ENCODE measurements at regions of chrX and their contacts with region 1.

Region 1: DNA sequence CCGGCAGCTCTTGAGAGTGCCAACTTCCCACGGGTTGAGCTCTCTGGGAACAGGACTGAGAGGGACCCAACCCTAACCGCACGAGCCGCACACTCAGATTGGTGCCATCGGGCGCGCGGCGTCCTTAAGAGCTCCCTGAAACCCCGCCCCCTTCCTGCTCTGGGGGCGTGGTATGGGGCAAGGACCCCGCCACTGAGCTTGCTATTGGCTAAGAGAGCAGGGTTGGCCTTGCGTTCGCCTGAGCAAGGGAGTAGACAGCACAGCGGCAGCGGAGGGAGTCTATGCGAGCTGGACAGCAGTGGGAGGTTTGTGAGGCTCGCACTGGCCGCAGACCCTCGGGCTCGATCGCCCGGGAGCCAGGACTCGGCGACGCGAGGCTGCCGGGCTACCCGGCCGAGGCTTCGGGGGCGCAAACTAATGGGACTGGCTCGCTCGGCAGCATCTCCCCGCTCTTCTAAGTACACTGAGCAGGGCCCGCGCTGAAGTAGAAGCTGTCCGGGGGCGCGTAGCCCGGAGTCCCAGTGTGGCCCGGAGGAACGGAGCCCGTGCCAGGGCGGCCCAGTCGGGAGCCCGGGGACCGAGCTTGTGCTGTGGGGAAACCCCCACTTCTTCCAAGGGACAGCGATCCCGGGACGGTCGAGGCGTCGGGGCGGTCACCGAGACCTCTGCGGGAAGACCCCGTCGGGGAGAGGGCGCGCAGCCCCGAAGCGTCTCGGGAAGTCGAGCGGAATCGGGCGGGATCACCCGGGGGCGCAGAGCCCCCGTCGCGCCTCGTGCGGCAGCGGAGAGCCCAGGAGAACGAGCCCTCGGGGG is at the start of gene EFNB1:
- DNase-seq: peak; percentile 70 to 86 (median 80)
- ATAC-seq: peak; percentile 93
- H3K4me3 ChIP-seq: peak within 1 kb of the TSS; percentile 41
- H3K27ac ChIP-seq: no peak within 1 kb of the TSS
- H3K4me1 ChIP-seq: peaks cover 0 to 22% of the 10 kb centered on the region in 2 experiments; a peak in 2 of 5 replicates
- H3K27me3 ChIP-seq: peaks cover 0 to 7% of the 10 kb centered on the region in 2 experiments; a peak in 1 of 5 replicates
- CTCF ChIP-seq: no peak
- EP300 ChIP-seq: no peak
- POLR2A ChIP-seq: no peak
- RAD21 ChIP-seq: no peak
- polyA plus RNA-seq, gene EFNB1: 0.01 TPM in 1 of 2 experiments, not detected in the other

Region 2: DNA sequence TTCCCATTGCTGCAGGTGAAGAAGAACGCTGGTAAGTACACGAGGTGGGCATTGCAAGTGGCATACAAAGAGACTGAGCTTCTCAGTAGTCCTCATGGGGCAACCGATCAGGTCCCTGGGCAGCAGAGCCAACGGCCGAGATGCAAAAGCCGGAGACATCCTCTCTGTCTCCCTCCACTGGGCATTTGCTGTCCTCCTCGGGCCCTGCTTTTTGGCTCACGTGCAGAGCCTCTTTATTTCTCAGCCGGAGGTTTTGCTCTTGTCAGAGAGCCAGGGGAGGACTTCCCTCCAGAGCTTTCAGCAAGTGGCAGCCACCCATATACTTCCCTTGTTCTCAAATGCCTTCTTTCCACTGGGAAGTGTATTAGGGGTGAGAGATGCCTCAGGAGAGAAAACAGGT is 163.4 kb before region 1 on chrX:
- CTCF ChIA-PET with region 1: no interaction called
- POLR2A ChIA-PET with region 1: no interaction called
- in situ Hi-C with region 1: no loop called
- intact Hi-C with region 1: no loop called
- DNase-seq: peak in 1 of 4 experiments; percentile 16
- ATAC-seq: peak; percentile 70
- H3K4me3 ChIP-seq: no peak overlapping the region
- H3K27ac ChIP-seq: no peak overlapping the region
- H3K4me1 ChIP-seq: no peaks in the 10 kb centered on the region
- H3K27me3 ChIP-seq: no peaks in the 10 kb centered on the region
- CTCF ChIP-seq: peak in 1 of 3 experiments; percentile 19; a peak in 2 of 6 replicates
- EP300 ChIP-seq: no peak
- POLR2A ChIP-seq: no peak
- RAD21 ChIP-seq: peak in 1 of 2 experiments; percentile 11; a peak in 1 of 4 replicates

Region 3: DNA sequence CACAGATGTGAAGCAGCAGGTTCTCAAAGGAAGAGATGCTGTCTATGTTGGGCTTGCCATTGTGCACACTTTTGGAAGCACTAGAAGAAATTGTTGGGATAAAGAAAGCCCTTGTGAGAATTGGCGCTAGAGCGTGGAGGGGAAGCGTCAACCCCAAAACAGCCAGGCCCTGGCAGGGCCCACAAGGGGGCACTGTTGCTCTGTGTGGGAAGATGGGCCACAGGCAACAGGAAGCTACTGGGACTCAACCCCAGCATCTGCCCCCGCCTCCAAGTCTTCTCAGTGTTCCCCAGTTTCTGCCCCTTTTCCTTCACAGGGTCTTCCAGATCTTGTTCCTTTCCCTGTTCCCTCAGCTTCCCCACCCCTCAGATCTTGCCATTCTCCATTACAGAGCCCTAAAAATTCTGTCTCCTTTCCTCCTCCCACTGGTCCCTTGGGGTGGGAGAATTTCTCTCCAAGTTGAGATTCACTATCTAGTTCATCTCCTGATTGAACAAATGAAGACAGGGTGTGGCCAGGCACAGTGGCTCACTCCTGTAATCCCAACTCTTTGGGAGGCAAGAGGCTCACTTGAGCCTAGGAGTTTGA is 95.9 kb before region 1 on chrX:
- CTCF ChIA-PET with region 1: no interaction called
- POLR2A ChIA-PET with region 1: no interaction called
- in situ Hi-C with region 1: loop called (anchors 10 kb)
- intact Hi-C with region 1: no loop called
- DNase-seq: peak; percentile 70 to 76 (median 74)
- ATAC-seq: peak; percentile 98
- H3K4me3 ChIP-seq: no peak overlapping the region
- H3K27ac ChIP-seq: no peak overlapping the region
- H3K4me1 ChIP-seq: no peaks in the 10 kb centered on the region
- H3K27me3 ChIP-seq: no peaks in the 10 kb centered on the region
- CTCF ChIP-seq: peak; percentile 79 to 86 (median 82)
- EP300 ChIP-seq: no peak
- POLR2A ChIP-seq: no peak
- RAD21 ChIP-seq: peak; percentile 50 to 83

Region 4: DNA sequence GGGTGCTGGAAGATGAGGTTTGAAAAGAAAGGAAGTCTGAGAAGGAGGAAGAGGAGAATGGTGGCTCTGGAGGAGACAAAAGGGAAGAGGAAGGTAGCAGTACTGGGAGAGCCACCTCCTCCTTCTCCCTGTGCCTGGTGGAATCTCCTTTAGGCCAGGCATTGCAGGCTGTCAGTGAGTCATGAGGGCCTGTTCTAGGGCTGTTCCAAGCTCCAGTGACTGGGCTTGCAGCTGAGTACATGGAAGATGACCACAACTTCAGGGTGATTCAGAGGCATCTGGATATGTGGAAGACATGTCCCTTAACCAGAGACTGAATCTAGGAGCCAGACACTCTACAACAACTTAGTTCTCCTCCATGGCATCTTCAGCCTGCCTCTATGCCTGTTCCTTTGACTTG is 107.7 kb after region 1 on chrX:
- CTCF ChIA-PET with region 1: no interaction called
- POLR2A ChIA-PET with region 1: no interaction called
- in situ Hi-C with region 1: no loop called
- intact Hi-C with region 1: no loop called
- DNase-seq: no peak
- ATAC-seq: no peak
- H3K4me3 ChIP-seq: no peak overlapping the region
- H3K27ac ChIP-seq: no peak overlapping the region
- H3K4me1 ChIP-seq: no peaks in the 10 kb centered on the region
- H3K27me3 ChIP-seq: no peaks in the 10 kb centered on the region
- CTCF ChIP-seq: no peak
- EP300 ChIP-seq: no peak
- POLR2A ChIP-seq: no peak
- RAD21 ChIP-seq: no peak

Region 5: GRCh38 chrX:69216911-69217310 is 388.0 kb after region 1 on chrX:
- CTCF ChIA-PET with region 1: interaction called, 3 read pairs
- POLR2A ChIA-PET with region 1: no interaction called
- in situ Hi-C with region 1: loop called (anchors 10 kb)
- intact Hi-C with region 1: loop called (anchors 1 kb)
- DNase-seq: no peak
- ATAC-seq: no peak
- H3K4me3 ChIP-seq: no peak overlapping the region
- H3K27ac ChIP-seq: no peak overlapping the region
- H3K4me1 ChIP-seq: no peaks in the 10 kb centered on the region
- H3K27me3 ChIP-seq: peaks cover 0 to 7% of the 10 kb centered on the region in 2 experiments; a peak in 1 of 5 replicates
- CTCF ChIP-seq: no peak
- EP300 ChIP-seq: no peak
- POLR2A ChIP-seq: no peak
- RAD21 ChIP-seq: no peak

Region 6: DNA sequence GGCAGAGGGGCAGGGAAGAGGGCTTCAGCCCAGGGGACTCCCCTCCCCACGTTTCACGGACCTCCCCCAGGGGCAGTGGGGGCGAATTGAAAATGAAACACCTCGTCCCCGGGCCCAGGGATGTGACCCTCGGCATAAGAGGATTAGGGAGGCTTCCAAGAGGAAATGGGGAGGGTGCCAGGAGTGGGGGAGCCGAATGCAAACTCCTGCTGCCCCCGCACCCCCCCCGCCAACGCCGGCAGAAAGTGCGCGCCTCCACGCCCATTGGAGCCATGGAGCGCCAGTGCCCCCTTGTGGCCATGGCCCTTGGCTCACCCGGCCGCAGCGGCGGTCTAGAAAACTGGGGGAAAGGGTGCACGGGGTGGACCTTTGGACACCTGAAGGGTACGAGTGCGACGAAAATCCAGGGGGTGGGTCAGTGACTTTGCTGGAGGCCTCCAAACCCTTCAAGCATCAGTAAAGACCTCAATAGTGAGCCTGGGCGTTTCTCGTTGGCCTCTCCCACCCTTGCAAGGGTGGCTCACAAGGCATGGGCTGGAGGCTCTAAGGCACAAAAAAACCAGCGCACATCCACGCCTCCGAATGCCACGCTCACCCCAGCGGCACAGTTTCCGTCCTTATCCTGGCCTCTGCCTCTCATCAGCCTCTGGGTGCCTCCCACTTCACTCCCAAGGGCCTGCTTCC is 457.1 kb after region 1 on chrX:
- CTCF ChIA-PET with region 1: interaction called, 4 read pairs
- POLR2A ChIA-PET with region 1: no interaction called
- in situ Hi-C with region 1: loop called (anchors 5 kb)
- intact Hi-C with region 1: loop called (anchors 2 kb)
- DNase-seq: peak; percentile 53 to 81 (median 74)
- ATAC-seq: peak; percentile 96
- H3K4me3 ChIP-seq: no peak overlapping the region
- H3K27ac ChIP-seq: no peak overlapping the region
- H3K4me1 ChIP-seq: peaks cover 0 to 7% of the 10 kb centered on the region in 2 experiments; a peak in 2 of 5 replicates
- H3K27me3 ChIP-seq: peaks cover 0 to 6% of the 10 kb centered on the region in 2 experiments; a peak in 1 of 5 replicates
- CTCF ChIP-seq: peak; percentile 63 to 81 (median 74)
- EP300 ChIP-seq: no peak
- POLR2A ChIP-seq: no peak
- RAD21 ChIP-seq: peak; percentile 53 to 68

Region 7: GRCh38 chrX:70096052-70096451 is 1267.1 kb after region 1 on chrX:
- CTCF ChIA-PET with region 1: no interaction called
- POLR2A ChIA-PET with region 1: no interaction called
- in situ Hi-C with region 1: no loop called
- intact Hi-C with region 1: loop called (anchors 10 kb)
- DNase-seq: peak; percentile 11 to 21 (median 14)
- ATAC-seq: peak; percentile 72
- H3K4me3 ChIP-seq: no peak overlapping the region
- H3K27ac ChIP-seq: no peak overlapping the region
- H3K4me1 ChIP-seq: no peaks in the 10 kb centered on the region; a peak in 1 of 5 replicates
- H3K27me3 ChIP-seq: no peaks in the 10 kb centered on the region
- CTCF ChIP-seq: peak; percentile 28 to 30 (median 29); a peak in 3 of 6 replicates
- EP300 ChIP-seq: no peak
- POLR2A ChIP-seq: no peak
- RAD21 ChIP-seq: peak in 1 of 2 experiments; percentile 29; a peak in 1 of 4 replicates